ENCODE measurements at regions of chr6 and their contacts with region 1.

Region 1: DNA sequence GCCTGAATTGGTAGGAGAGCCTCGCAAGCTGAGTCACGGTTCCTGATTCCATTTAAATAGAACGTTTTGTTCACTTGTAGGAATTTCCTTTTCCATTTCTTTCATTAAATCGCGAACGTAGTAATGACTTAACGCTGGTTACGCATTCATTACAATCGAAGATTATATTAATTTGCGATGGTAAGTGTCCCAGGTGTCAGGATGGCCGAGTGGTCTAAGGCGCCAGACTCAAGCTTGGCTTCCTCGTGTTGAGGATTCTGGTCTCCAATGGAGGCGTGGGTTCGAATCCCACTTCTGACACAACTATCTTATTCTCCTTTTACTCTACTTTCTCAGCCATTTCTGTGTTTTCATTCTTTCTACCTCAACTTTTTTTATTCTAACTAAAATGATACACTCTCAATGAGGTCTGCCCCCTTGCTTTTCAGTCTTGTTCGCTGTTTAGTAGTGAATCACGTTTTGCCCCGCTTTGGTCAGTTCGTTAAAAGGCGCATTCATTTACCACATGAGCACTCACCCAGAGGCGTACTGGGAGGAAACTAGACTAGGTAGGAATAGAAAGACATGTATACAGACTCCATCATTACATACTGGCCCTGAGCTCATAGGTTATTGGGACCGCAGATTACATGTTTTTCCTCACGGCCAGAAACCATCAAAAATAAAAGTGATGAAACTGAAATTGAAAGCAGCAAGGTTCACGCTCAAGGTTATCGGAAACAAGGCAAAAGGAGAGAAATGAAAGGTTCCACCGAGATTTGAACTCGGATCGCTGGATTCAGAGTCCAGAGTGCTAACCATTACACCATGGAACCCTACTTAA is 17.3 kb upstream of the TRIM27 start:
- DNase-seq: peak; percentile 68 to 90
- ATAC-seq: peak; percentile 65 to 86 (median 78)
- H3K4me3 ChIP-seq: peak overlapping the region; percentile 61
- H3K4me3 Mint-ChIP-seq: peak overlapping the region; percentile 99
- H3K27ac ChIP-seq: peak overlapping the region; percentile 85
- H3K27ac Mint-ChIP-seq: peak overlapping the region; percentile 96 to 98
- H3K4me1 ChIP-seq: peaks cover 35% of the 10 kb centered on the region
- H3K4me1 Mint-ChIP-seq: peaks cover 48 to 51% of the 10 kb centered on the region in 2 donors
- H3K27me3 ChIP-seq: no peaks in the 10 kb centered on the region
- H3K27me3 Mint-ChIP-seq: peaks cover 0 to 7% of the 10 kb centered on the region in 2 donors
- CTCF ChIP-seq: no peak

Region 2: GRCh38 chr6:28863604-28864320 is 77.3 kb before region 1 on chr6:
- intact Hi-C with region 1: loop called (anchors 1 kb)
- DNase-seq: peak; percentile 74 to 93
- ATAC-seq: peak; percentile 41 to 47 (median 45)
- H3K4me3 ChIP-seq: peak overlapping the region; percentile 81
- H3K4me3 Mint-ChIP-seq: peak overlapping the region; percentile 99
- H3K27ac ChIP-seq: peak overlapping the region; percentile 39
- H3K27ac Mint-ChIP-seq: peak overlapping the region; percentile 93 to 99
- H3K4me1 ChIP-seq: peaks cover 32% of the 10 kb centered on the region
- H3K4me1 Mint-ChIP-seq: peaks cover 50 to 55% of the 10 kb centered on the region in 2 donors
- H3K27me3 ChIP-seq: no peaks in the 10 kb centered on the region
- H3K27me3 Mint-ChIP-seq: peaks cover 11 to 19% of the 10 kb centered on the region in 2 donors
- CTCF ChIP-seq: no peak

Region 3: DNA sequence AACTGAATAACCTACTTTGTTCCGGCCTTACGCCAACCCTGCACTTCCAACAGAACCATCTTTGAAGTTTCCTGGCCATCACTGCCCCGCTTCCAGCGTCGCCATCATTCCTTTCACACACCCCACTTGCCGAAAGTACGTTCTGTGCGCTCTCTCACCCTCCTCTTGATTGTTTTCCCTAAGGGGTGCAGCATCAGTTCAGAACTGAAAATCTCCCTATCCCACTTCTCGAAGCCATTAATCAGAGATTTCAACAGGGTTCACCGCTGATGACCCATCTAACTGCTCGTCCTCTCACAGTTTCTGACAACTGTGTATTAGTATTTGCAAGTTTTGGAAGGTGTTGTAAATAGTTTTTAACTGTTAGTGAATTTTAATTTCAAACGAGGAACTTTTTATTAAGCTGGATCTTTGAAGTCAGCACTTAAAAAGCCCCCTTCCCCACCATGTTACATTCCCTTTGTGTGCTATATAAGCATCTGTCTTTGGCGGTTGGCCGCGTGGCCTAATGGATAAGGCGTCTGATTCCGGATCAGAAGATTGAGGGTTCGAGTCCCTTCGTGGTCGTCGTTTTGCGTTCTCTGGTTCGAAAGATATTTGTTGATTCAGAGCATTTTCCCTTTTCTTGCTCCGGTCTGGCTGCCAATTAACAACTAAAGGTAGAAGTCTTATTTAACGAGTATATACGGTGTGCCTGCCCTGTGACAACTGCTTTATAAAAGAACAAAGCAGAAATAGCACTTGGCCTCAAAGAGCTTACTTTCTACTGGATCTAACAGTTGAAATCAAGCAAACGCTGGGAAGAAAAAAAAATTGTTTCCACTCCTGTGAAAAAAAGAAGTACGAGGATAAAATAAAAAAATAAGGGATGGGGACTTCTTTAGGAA is 59.9 kb before region 1 on chr6:
- intact Hi-C with region 1: loop called (anchors 1 kb)
- DNase-seq: peak; percentile 60 to 74
- ATAC-seq: no peak
- H3K4me3 ChIP-seq: peak overlapping the region; percentile 32
- H3K4me3 Mint-ChIP-seq: peak overlapping the region; percentile 93
- H3K27ac ChIP-seq: no peak overlapping the region
- H3K27ac Mint-ChIP-seq: peak overlapping the region; percentile 84 to 96
- H3K4me1 ChIP-seq: peaks cover 31% of the 10 kb centered on the region
- H3K4me1 Mint-ChIP-seq: peaks cover 32 to 33% of the 10 kb centered on the region in 2 donors
- H3K27me3 ChIP-seq: peaks cover 6% of the 10 kb centered on the region
- H3K27me3 Mint-ChIP-seq: peaks cover 15 to 20% of the 10 kb centered on the region in 2 donors
- CTCF ChIP-seq: no peak

Region 4: GRCh38 chr6:28895134-28895812 is 45.8 kb before region 1 on chr6:
- intact Hi-C with region 1: loop called (anchors 1 kb)
- DNase-seq: peak; percentile 84 to 96
- ATAC-seq: peak; percentile 66 to 84 (median 74)
- H3K4me3 ChIP-seq: peak overlapping the region; percentile 72
- H3K4me3 Mint-ChIP-seq: peak overlapping the region; percentile 97
- H3K27ac ChIP-seq: peak overlapping the region; percentile 96
- H3K27ac Mint-ChIP-seq: peak overlapping the region; percentile 99
- H3K4me1 ChIP-seq: peaks cover 13% of the 10 kb centered on the region
- H3K4me1 Mint-ChIP-seq: peaks cover 24 to 25% of the 10 kb centered on the region in 2 donors
- H3K27me3 ChIP-seq: no peaks in the 10 kb centered on the region
- H3K27me3 Mint-ChIP-seq: no peaks in the 10 kb centered on the region
- CTCF ChIP-seq: no peak

Region 5: DNA sequence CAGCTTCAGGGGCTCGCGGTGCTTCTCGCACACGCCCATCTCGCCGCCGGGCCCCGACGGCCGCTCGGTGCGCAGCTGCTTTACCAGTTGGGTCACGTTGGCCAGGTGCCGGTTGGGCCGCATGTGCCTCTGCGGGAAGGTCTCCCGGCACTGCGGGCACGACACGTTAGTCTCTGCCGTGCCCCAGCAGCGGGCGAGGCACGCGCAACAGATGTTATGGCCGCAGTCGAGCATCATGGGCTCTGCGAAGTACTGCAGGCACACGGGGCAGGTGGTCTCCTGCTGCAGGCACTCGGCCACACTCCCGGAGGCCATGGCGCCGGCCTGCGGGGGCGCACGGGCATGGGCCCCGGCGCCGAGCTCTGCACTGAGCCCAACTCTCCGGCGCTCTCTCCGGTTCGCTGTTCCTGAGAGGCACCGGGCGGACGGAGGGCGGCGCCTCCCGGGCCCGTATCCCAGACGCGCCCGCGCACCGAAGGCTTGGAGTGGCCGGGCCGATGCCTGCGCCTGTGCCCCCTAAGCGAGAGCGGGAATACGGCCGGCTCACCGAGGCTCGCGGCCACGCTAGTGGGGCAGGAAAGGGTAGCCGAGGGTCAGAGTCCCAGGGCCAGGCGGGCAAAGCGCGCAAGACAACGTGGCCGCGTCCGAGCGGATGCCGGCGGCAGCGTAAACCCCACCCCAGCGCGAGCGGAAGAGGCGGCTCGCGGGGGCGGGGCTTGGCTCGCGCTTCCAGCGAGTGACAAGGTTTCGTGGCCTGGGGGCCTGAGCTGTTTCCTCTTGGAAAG is 17.6 kb before region 1 on chr6 and contains the start of gene TRIM27:
- intact Hi-C with region 1: loop called (anchors 1 kb)
- DNase-seq: peak; percentile 81 to 89
- ATAC-seq: peak; percentile 86 to 93 (median 90)
- H3K4me3 ChIP-seq: peak within 1 kb of the TSS; percentile 81
- H3K4me3 Mint-ChIP-seq: peak within 1 kb of the TSS; percentile 96
- H3K27ac ChIP-seq: peak within 1 kb of the TSS; percentile 84
- H3K27ac Mint-ChIP-seq: peak within 1 kb of the TSS; percentile 86 to 92
- H3K4me1 ChIP-seq: peaks cover 15% of the 10 kb centered on the region
- H3K4me1 Mint-ChIP-seq: peaks cover 32 to 37% of the 10 kb centered on the region in 2 donors
- H3K27me3 ChIP-seq: no peaks in the 10 kb centered on the region
- H3K27me3 Mint-ChIP-seq: peaks cover 0 to 2% of the 10 kb centered on the region in 2 donors
- CTCF ChIP-seq: no peak
- total RNA-seq, gene TRIM27: 19.3 to 33.6 (median 25.1) TPM

Region 6: DNA sequence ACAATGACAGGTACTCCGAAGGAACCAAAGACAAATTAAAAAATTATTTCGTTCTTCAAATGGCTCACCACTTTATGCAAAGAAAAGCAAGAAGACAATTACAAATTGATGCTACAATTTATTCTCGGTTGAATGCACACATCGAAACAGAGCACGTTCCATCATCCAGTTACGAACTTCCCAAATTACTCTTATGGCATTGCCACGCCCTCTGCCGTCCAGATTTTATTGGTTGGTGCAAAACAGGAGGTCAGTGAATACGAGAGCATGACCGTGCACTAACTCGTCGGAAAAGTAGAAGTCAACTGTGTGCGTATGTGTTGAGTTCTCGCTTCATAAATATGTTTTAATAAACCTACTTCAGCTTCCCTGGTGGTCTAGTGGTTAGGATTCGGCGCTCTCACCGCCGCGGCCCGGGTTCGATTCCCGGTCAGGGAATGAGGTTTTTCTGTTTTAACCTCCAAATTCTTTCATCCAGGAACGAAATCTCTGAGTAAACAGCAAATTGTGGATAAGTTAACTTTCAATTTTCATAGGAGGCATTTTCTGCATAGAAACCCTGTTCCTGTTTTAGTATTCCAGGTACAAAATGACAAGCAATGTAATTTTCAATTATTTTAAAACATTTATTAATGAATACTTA is 40.9 kb after region 1 on chr6:
- intact Hi-C with region 1: loop called (anchors 1 kb)
- DNase-seq: peak; percentile 68 to 89
- ATAC-seq: peak; percentile 72 to 86 (median 73)
- H3K4me3 ChIP-seq: peak overlapping the region; percentile 86
- H3K4me3 Mint-ChIP-seq: peak overlapping the region; percentile 97
- H3K27ac ChIP-seq: peak overlapping the region; percentile 28
- H3K27ac Mint-ChIP-seq: peak overlapping the region; percentile 95 to 99
- H3K4me1 ChIP-seq: peaks cover 19% of the 10 kb centered on the region
- H3K4me1 Mint-ChIP-seq: peaks cover 66 to 67% of the 10 kb centered on the region in 2 donors
- H3K27me3 ChIP-seq: peaks cover 24% of the 10 kb centered on the region
- H3K27me3 Mint-ChIP-seq: peaks cover 41 to 68% of the 10 kb centered on the region in 2 donors
- CTCF ChIP-seq: no peak